Gastrocnemius medialis (tissue), 4 donors: ENCODE measurements at regions of chr14 and their contacts with region 1.

Region 1: DNA sequence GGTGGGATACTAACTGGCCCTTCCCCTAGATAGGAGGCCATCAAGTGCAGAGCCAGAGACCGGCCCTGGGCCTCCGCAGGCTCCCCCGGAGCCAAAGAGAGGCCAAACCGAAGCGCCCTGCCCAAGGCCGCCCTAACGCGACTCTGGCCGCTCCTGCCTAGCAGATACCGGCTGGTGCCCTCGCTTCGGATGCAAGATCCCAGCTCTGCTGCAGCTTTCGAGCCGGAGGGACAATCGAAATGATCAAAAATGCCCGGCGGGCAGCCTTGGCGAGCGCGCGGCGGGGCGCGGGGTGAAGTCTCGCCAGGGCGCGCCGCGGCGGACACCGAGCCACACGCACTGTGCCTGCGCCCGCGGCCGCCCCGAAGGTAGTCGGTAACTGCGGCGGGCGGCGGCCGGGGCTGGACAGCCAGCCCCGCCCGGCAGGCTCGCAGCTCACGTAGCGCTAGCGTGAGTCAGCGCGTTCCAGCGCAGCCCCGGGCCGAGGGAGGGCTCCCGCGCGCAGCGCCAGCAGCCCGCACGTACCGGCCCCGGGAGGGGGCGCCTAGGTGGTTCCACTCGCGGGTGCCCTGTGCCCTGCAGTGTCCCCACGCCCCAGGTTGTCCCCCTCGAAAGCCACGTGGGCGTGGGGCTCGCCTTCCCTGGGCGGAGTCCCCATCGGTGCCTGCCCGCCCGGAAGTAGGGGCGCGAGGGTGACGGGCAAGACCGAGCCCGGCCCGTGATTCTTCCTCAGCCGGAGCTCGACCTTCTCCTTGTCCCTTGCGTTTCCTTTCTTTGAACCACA is 109.2 kb upstream of the EGLN3 start:
- DNase-seq: peak; percentile 61 to 86
- ATAC-seq: peak; percentile 65 to 70
- H3K4me3 ChIP-seq: peak overlapping the region; percentile 62 to 87 (median 70)
- H3K27ac ChIP-seq: peak overlapping the region; percentile 91 to 97 (median 94)
- H3K4me1 ChIP-seq: peaks cover 24 to 34% of the 10 kb centered on the region in 2 donors
- H3K27me3 ChIP-seq: no peaks in the 10 kb centered on the region
- CTCF ChIP-seq: peak in 4 of 5 experiments; percentile 30 to 43 (median 42)
- POLR2A ChIP-seq: peak; percentile 80 to 89

Region 2: GRCh38 chr14:33938131-33938949 is 121.7 kb before region 1 on chr14:
- in situ Hi-C with region 1: no loop called
- intact Hi-C with region 1: loop called (anchors 5 kb)
- DNase-seq: peak; percentile 40 to 74
- ATAC-seq: peak; percentile 84 to 92
- H3K4me3 ChIP-seq: peak overlapping the region; percentile 35 to 43 (median 42)
- H3K27ac ChIP-seq: peak overlapping the region; percentile 65 to 76 (median 72)
- H3K4me1 ChIP-seq: peaks cover 25 to 27% of the 10 kb centered on the region in 2 donors
- H3K27me3 ChIP-seq: no peaks in the 10 kb centered on the region
- CTCF ChIP-seq: no peak
- POLR2A ChIP-seq: no peak

Region 3: DNA sequence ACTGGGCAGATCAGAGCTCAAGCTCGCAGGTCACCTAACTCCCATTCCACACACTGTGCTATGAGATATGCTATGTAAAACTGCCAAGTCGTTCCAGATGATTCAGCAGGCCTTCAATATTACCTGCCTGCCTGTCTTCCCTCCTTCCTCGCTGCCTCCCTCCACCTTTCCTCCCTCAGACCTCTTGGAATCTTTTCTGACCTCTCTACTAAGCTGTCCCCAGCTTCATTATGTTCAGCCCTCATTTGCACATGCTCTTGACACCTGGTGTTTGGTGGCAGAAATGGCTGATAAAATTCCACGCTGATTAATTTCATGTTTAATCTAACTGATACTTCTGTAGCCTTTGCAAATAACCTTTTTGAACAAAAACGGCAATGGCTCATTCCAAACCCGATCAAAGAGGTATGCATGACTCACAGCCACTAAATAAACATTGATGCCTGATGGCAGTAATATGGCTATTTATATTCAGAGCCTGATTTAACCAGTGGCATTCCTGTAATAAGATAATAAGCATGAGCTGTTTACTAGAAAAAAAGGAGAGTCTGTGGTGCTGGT is 21.6 kb after region 1 on chr14:
- in situ Hi-C with region 1: no loop called
- intact Hi-C with region 1: loop called (anchors 1 kb)
- DNase-seq: peak in 1 of 2 donors; percentile 26
- ATAC-seq: peak; percentile 48 to 60
- H3K4me3 ChIP-seq: peak overlapping the region in 1 of 4 donors; percentile 7
- H3K27ac ChIP-seq: peak overlapping the region; percentile 83 to 95 (median 91)
- H3K4me1 ChIP-seq: peaks cover 36 to 48% of the 10 kb centered on the region in 2 donors
- H3K27me3 ChIP-seq: no peaks in the 10 kb centered on the region
- CTCF ChIP-seq: no peak
- POLR2A ChIP-seq: peak in 1 of 2 donors; percentile 3

Region 4: DNA sequence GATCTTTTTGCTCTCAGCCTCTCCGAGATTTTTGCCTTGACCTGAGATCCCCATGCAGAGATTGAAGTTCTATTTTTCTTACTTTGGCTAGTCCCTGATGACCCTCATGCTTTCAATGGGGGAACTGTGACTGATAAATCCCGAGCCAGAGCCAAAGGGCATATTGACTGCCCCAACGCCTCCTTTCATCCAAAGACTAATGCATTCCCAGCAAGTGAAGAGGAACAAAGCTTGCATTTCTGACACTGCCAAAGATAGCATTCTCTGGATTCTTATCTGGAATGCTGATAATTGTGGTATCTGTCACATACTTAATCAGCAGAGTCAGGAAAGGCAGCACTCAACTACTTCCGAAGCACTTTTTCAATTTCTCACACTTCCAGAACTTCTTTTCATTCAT is 43.1 kb after region 1 on chr14:
- in situ Hi-C with region 1: no loop called
- intact Hi-C with region 1: no loop called
- DNase-seq: no peak
- ATAC-seq: no peak
- H3K4me3 ChIP-seq: no peak overlapping the region
- H3K27ac ChIP-seq: no peak overlapping the region
- H3K4me1 ChIP-seq: peaks cover 13 to 21% of the 10 kb centered on the region in 2 donors
- H3K27me3 ChIP-seq: no peaks in the 10 kb centered on the region
- CTCF ChIP-seq: no peak
- POLR2A ChIP-seq: no peak

Region 5: DNA sequence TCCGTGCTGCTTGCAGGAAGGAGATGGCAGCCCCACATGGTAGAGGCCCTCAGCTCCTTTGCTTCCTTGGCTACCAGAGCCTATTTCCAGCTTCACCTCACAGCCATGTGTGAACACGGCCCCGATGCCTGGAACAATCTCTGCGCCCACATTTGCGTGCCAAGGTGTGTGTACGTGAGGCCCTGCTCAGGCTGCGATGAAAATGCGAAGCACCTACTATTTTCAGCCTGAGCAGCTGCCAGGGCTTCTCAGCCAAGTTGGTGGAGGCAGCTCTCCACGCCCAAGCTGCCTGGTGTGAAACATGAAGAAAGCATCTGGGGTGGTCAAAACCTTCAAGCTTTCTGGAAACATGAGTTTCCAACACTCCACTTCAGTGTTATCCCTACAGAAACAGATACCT is 68.6 kb after region 1 on chr14:
- in situ Hi-C with region 1: no loop called
- intact Hi-C with region 1: loop called (anchors 1 kb)
- DNase-seq: peak; percentile 44 to 70
- ATAC-seq: peak; percentile 25 to 29
- H3K4me3 ChIP-seq: no peak overlapping the region
- H3K27ac ChIP-seq: peak overlapping the region; percentile 89 to 93 (median 92)
- H3K4me1 ChIP-seq: peaks cover 35 to 40% of the 10 kb centered on the region in 2 donors
- H3K27me3 ChIP-seq: no peaks in the 10 kb centered on the region
- CTCF ChIP-seq: no peak
- POLR2A ChIP-seq: no peak

Region 6: GRCh38 chr14:34252227-34252626 is 192.2 kb after region 1 on chr14:
- in situ Hi-C with region 1: no loop called
- intact Hi-C with region 1: no loop called
- DNase-seq: no peak
- ATAC-seq: no peak
- H3K4me3 ChIP-seq: no peak overlapping the region
- H3K27ac ChIP-seq: peak overlapping the region; percentile 12 to 69 (median 64)
- H3K4me1 ChIP-seq: peaks cover 6 to 21% of the 10 kb centered on the region in 2 donors
- H3K27me3 ChIP-seq: no peaks in the 10 kb centered on the region
- CTCF ChIP-seq: no peak
- POLR2A ChIP-seq: no peak

Region 7: DNA sequence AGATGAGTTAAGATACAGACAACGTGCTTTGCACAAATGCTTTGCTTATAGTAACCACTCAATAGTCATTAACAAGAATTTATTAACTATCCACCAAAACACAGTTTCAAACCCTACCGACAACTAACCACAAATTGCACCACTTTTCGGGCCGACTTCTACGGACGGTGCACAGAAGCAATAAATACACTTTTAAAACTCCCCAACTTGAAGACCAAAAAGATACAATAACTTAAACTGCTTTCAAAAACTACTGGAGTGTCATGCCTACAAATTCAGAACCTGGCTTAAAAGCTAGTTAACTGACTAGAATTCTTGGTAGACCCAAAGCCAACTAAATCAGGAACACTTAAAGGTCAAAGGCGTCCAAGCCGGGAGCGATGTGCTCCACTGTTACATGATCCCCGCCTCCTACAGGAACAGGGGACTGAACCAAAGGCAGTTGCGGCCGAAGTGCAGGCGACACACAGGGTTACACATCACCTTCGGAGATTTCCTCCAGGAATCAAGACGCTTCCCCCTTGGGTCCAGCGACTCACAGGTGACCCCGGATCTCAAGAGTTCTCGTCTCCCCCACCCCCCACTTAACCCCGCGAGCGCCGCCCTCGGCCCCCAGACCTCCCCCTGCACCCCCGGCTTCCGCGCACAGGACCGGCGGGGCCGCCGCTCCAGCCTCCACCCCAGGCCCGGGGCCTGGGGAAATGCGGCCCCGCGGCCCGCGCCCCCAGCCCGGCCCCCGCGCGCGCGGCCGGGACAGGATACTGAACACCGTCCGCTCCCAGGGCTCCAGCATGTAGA is 401.5 kb after region 1 on chr14:
- in situ Hi-C with region 1: no loop called
- intact Hi-C with region 1: loop called (anchors 10 kb)
- DNase-seq: peak; percentile 37 to 66
- ATAC-seq: peak; percentile 73 to 78
- H3K4me3 ChIP-seq: peak overlapping the region; percentile 53 to 73 (median 62)
- H3K27ac ChIP-seq: peak overlapping the region; percentile 89 to 91 (median 90)
- H3K4me1 ChIP-seq: peaks cover 12 to 21% of the 10 kb centered on the region in 2 donors
- H3K27me3 ChIP-seq: no peaks in the 10 kb centered on the region
- CTCF ChIP-seq: no peak
- POLR2A ChIP-seq: no peak